Thyroid gland (tissue), 4 donors: ENCODE measurements at regions of chr12 and their contacts with region 1.

Region 1: GRCh38 chr12:63802012-63802608 is 22.4 kb downstream of the RXYLT1 start:
- DNase-seq: no peak
- H3K4me3 ChIP-seq: no peak overlapping the region
- H3K27ac ChIP-seq: no peak overlapping the region
- H3K4me1 ChIP-seq: no peaks in the 10 kb centered on the region
- H3K27me3 ChIP-seq: no peaks in the 10 kb centered on the region
- CTCF ChIP-seq: peak in 5 of 6 experiments; percentile 20 to 76 (median 64)
- POLR2A ChIP-seq: no peak

Region 2: DNA sequence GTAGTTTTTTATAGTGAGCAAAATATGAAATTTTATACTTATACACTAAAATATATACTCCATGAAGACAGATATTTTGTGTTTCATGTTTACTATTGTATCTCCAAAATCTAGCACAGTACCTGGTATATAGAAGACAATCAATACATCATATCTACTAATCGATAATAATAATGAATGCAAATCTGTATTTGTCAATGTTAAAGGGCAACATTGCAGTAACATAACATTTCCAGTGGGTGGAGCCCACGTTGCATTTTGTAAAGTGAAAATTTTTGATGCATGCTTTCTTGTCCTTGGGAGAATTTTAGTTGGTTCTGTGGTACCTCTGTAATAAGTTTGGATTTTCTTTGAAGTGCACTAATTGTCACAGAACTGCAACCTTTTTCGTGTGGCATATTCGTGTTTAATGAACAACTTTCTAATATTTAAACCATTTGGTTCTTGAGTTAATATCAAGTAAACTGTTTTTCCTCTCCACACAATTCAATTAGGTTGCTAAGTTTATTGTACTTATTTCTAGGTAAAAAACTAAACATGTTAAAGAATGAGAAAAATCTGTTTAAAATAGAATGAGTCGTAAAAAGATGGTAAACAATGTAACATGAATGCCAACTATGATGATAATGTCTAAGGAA is 698.5 kb before region 1 on chr12:
- intact Hi-C with region 1: loop called (anchors 10 kb)
- DNase-seq: peak in 1 of 2 donors; percentile 14
- H3K4me3 ChIP-seq: no peak overlapping the region
- H3K27ac ChIP-seq: no peak overlapping the region
- H3K4me1 ChIP-seq: no peaks in the 10 kb centered on the region
- H3K27me3 ChIP-seq: no peaks in the 10 kb centered on the region
- CTCF ChIP-seq: peak; percentile 63 to 92 (median 82)
- POLR2A ChIP-seq: no peak

Region 3: GRCh38 chr12:64019118-64019517 is 217.0 kb after region 1 on chr12:
- intact Hi-C with region 1: no loop called
- DNase-seq: no peak
- H3K4me3 ChIP-seq: no peak overlapping the region
- H3K27ac ChIP-seq: no peak overlapping the region
- H3K4me1 ChIP-seq: peaks cover 22 to 23% of the 10 kb centered on the region in 2 donors
- H3K27me3 ChIP-seq: no peaks in the 10 kb centered on the region
- CTCF ChIP-seq: no peak
- POLR2A ChIP-seq: no peak